ENCODE measurements at regions of chr5 and their contacts with region 1.

Region 1: GRCh38 chr5:112921833-112922817 is at the start of gene REEP5:
- DNase-seq: peak; percentile 87 to 88
- H3K4me3 ChIP-seq: peak within 1 kb of the TSS; percentile 76 to 93 (median 87)
- H3K27ac ChIP-seq: peak within 1 kb of the TSS; percentile 94 to 98 (median 95)
- H3K4me1 ChIP-seq: peaks cover 38 to 42% of the 10 kb centered on the region in 2 donors
- H3K27me3 ChIP-seq: no peaks in the 10 kb centered on the region
- CTCF ChIP-seq: peak; percentile 45 to 98 (median 82)
- POLR2A ChIP-seq: peak; percentile 89 to 98
- total RNA-seq, gene REEP5: 169 to 300 (median 231) TPM

Region 2: DNA sequence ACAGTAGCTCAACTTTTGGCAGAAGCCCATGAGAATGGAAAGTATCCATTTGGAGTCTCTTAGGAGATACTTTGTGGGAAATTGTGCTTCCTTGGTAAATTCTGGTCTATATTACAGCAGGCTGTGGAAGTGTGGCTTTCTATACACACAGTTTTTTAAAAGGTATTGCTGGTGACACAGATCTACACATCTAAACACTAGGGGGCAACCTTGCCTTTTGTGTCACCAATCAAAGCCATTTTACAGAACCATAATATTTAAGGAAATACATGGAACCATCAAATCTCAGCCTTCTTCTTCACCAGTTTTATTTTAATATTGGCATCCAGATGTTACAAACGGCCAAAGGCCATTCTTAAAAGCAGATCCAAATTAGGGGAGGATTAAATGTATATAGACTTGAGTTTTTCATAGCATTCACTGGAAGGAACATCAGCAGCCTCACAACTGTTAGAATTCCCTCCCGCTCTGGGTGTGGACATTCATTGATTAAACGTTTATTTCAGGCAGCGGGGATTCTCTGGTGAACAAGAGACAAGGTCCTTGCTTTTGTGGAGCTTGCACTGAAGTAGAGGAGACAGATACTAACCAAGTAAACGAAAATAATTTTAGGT is 370.6 kb before region 1 on chr5:
- intact Hi-C with region 1: loop called (anchors 10 kb)
- DNase-seq: peak; percentile 17 to 25
- H3K4me3 ChIP-seq: no peak overlapping the region
- H3K27ac ChIP-seq: no peak overlapping the region
- H3K4me1 ChIP-seq: peaks cover 4 to 12% of the 10 kb centered on the region in 2 donors
- H3K27me3 ChIP-seq: no peaks in the 10 kb centered on the region
- CTCF ChIP-seq: peak; percentile 59 to 86 (median 71)
- POLR2A ChIP-seq: no peak

Region 3: DNA sequence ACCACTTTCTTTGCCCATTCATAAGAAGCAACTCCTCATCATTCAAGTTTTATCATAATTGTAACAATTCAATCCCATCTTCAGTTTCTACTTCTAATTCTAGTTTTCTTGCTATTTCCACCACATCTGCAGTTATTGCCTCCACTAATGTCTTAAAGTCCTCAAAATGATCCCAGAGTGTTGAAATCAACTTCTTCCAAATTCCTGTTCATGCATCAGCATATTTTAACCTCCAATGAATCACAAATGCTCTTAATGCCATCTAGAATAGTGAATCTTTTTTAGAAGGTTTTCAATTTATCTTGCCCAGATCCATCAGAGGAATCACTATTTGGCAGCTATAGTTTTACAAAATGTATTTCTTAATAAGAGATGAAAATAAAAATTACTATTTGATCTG is 64.3 kb before region 1 on chr5:
- intact Hi-C with region 1: loop called (anchors 5 kb)
- DNase-seq: no peak
- H3K4me3 ChIP-seq: no peak overlapping the region
- H3K27ac ChIP-seq: no peak overlapping the region
- H3K4me1 ChIP-seq: peaks cover 13 to 16% of the 10 kb centered on the region in 2 donors
- H3K27me3 ChIP-seq: no peaks in the 10 kb centered on the region
- CTCF ChIP-seq: no peak
- POLR2A ChIP-seq: no peak